ENCODE measurements at regions of chr4 and their contacts with region 1.

Region 1: GRCh38 chr4:184168406-184169019 is 49.2 kb downstream of the ENPP6 start:
- DNase-seq: peak; percentile 27
- H3K4me3 ChIP-seq: no peak overlapping the region
- H3K27ac ChIP-seq: no peak overlapping the region
- H3K27me3 ChIP-seq: peaks cover 2% of the 10 kb centered on the region
- CTCF ChIP-seq: peak; percentile 97

Region 2: GRCh38 chr4:184100297-184100885 is 68.1 kb before region 1 on chr4:
- CTCF ChIA-PET with region 1: interaction called, 10 read pairs
- POLR2A ChIA-PET with region 1: no interaction called
- DNase-seq: no peak
- H3K4me3 ChIP-seq: no peak overlapping the region
- H3K27ac ChIP-seq: no peak overlapping the region
- H3K27me3 ChIP-seq: no peaks in the 10 kb centered on the region
- CTCF ChIP-seq: peak; percentile 69

Region 3: DNA sequence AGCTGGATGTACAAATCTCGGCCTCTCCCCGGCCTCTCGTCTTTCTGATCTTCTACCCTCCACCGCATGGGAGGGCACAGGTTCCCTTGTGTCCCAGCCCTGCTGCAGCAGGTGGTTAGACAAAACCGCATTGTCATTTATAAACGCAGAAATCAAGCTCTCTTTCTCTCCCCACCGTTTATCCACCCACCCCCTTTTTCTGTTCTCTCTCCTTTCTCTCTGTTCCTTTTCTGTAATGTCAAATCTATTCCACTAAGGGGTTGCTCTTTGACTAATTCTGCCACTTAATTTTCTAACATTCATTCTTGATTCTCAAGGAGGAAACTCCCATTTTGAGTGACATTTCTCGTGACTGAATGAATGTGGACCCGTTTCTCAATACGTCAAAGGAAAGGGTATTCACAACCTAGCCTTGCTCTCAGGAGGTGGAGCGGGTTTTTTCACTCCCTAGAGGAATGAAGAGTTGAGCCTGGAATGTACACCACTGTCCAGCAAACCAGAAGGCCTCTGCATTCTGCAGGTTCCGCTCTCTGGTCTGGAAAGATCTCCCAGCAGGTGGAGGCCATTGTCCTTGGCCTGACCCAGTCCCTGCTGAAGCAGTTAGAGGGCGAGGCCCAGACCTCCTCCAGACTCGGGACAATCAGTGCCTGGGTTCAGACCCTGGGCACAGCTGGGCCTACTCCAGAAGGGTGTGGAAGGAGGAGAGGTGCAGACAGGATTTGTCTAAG is 120.1 kb after region 1 on chr4:
- CTCF ChIA-PET with region 1: no interaction called
- POLR2A ChIA-PET with region 1: no interaction called
- DNase-seq: no peak
- H3K4me3 ChIP-seq: no peak overlapping the region
- H3K27ac ChIP-seq: no peak overlapping the region
- H3K27me3 ChIP-seq: no peaks in the 10 kb centered on the region
- CTCF ChIP-seq: no peak

Region 4: DNA sequence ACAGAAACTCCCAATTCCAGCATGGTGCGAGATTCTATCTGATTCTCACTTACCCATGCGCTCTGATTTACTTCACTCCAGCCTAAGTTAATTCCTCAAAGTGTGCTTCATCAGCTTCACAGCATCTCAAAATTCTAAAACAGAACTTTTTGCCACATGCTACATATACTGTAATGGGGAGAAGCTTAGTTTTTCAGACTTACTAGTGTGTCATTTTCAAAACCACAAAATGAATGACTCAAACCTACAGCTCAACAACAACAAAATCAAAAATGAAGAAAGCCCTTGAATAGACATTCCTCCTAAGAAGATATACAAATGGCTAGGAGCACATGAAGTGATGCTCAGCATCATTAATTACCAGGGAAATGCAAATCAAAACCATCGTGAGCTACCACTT is 290.9 kb after region 1 on chr4:
- CTCF ChIA-PET with region 1: no interaction called
- POLR2A ChIA-PET with region 1: no interaction called
- DNase-seq: no peak
- H3K4me3 ChIP-seq: no peak overlapping the region
- H3K27ac ChIP-seq: no peak overlapping the region
- H3K27me3 ChIP-seq: no peaks in the 10 kb centered on the region
- CTCF ChIP-seq: no peak

Measured in AG04450 (cell line).